ENCODE measurements at regions of chr12 and their contacts with region 1.

Region 1: DNA sequence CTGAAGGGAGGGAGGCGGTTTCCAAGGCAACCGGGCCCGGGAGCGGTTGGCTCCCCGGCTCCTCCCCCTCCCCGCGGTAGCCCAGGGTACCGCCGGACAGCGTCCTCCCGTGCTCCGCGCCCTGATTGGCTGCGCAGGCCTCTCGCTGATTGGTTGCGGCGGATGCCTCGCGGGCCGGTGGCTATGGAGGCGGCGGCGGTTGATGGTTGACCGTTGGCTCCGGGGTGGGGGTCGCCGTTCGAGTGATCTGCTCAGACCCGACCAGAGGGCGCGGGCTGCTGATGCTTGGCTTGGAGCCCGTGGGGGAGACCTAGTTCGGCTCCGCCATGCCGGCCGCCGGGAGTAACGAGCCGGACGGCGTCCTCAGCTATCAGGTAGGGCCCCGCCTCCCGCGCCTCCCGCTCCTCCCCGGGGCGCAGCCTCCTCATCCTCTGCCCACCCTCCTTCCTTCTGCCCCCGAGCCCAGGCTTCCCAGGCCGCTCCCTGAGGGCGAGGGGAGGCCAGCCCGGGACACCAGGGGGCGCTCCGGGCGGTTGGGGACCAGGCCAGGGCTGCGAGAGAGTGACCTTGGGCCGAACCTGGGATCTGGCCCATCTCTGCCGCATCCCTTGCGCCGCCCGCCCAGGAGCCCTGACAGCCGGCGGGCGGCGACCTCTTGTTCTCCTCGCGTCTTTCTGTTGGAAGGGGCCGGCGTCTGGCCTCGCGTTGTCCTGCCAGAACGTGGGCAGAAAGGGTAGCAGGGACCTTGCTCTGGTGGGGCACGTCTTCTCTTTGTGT is at the start of gene SLC4A8:
- ATAC-seq: peak; percentile 95 to 98 (median 96)
- H3K4me3 ChIP-seq: peak within 1 kb of the TSS; percentile 58 to 78 (median 66)
- H3K27ac ChIP-seq: peak within 1 kb of the TSS; percentile 88 to 91
- H3K4me1 ChIP-seq: peaks cover 12 to 15% of the 10 kb centered on the region in 2 donors
- total RNA-seq, gene SLC4A8: 5.8 to 26.3 (median 19.8) TPM

Region 2: GRCh38 chr12:51028811-51029484 is 395.9 kb before region 1 on chr12:
- in situ Hi-C with region 1: no loop called
- ATAC-seq: no peak
- H3K4me3 ChIP-seq: no peak overlapping the region
- H3K27ac ChIP-seq: no peak overlapping the region
- H3K4me1 ChIP-seq: peaks cover 7 to 11% of the 10 kb centered on the region in 2 donors

Region 3: DNA sequence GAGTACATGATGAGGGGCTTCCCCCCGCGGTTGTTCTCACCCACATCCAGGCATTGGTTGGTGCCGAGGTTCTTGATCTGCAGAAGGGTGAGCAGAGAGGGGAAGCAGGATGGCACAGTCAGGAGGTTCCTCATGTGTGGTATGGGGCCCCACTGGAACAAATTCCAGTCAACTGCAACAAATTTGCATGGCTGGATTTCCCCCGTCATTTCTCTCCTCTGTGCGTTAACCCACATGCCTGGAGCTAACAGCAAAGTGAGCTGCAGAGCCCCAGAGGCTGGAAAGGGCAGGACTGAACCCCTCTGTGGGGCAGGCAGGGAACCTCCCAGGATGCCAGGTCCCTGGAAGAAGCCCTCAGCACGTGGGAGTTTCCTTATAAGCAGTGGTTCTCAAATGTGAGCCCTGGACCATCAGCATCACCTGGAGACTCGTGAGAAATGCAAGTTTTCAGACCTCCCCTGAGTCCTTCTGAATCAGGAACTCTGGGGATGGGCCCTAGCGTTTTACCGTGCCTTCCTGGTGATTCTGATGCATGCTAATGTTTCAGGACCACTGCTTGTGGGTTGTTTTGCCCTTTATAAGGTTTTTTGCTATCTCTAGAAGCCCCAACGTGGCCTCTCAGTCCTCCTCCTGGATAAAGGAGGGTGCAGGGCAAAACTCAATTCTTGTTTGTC is 67.3 kb before region 1 on chr12:
- in situ Hi-C with region 1: no loop called
- ATAC-seq: no peak
- H3K4me3 ChIP-seq: no peak overlapping the region
- H3K27ac ChIP-seq: no peak overlapping the region
- H3K4me1 ChIP-seq: no peaks in the 10 kb centered on the region

Region 4: DNA sequence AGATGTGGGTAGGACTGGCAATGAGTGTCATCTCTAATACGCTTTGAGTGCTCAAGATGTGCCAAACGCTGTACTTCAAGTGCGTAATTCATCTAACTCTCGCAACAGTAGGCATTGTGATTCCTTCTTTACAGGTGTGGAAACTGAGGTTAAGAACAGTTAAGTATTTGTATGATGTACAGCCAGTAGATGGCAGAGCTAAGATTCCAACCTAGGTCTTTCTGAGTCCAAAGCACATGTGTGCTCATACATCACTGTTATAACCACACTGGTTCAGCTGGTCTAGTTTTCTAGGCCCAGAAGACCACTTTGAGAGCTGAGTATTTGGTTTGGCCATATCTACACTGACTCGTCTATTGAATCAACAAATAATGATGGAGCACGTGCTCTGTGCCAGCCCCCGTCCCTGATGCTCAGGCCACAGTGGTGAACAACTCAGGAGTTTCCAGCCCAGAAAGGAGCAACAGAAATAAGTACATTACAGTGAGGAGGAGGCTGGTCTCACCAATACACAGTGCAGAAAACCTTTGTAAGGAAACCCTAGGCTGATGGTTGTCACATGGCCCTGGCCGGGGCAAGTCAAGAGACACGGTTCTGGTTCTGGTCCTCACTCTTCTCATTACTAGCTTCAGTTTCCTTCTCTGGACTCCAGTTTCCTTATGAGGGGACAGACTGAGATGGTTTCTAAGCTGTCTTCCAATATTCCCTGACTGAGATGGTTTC is 96.9 kb after region 1 on chr12:
- in situ Hi-C with region 1: loop called in 2 of 9 experiments (anchors 10 to 25 kb)
- ATAC-seq: no peak
- H3K4me3 ChIP-seq: no peak overlapping the region
- H3K27ac ChIP-seq: no peak overlapping the region
- H3K4me1 ChIP-seq: no peaks in the 10 kb centered on the region

Region 5: GRCh38 chr12:51678086-51678724 is 253.4 kb after region 1 on chr12:
- in situ Hi-C with region 1: loop called in 1 of 9 experiments (anchors 25 kb)
- ATAC-seq: peak; percentile 44 to 86 (median 74)
- H3K4me3 ChIP-seq: no peak overlapping the region
- H3K27ac ChIP-seq: no peak overlapping the region
- H3K4me1 ChIP-seq: peaks cover 7 to 24% of the 10 kb centered on the region in 2 donors

Region 6: DNA sequence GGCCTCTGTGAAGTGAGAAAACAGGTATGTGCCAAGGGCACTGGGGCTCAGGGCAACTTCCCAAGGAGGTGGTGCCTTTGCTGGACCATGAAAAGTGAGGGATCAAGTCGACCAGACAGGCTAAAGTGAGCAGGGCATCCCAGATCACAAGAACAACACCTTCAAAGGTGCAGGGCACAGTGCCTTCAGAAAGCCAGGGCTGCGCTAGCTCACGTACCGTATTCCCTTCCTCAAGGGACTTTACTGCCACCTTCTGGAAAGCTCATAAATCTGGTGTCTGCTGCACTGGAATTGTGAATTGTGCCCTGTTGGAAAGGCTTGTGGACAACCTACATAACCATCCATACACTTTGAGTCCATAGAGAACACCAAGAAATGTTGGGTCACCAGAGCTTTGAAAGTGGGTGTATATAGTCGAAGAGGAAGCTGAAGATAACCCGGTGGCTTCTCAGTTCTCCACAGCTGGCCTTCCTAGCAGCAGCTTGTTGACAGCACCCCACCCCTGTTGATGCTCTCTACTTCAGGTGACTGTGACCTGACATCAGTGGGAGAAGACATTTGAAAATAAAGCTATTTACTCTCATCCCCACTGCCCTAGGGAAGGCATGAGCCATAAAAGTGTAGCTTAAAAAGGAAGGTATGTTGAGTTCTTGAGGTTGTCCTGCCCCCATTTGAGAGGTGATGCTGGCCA is 399.2 kb after region 1 on chr12:
- in situ Hi-C with region 1: loop called in 2 of 9 experiments (anchors 10 to 25 kb)
- ATAC-seq: peak; percentile 5 to 64 (median 40)
- H3K4me3 ChIP-seq: no peak overlapping the region
- H3K27ac ChIP-seq: no peak overlapping the region
- H3K4me1 ChIP-seq: peaks cover 19 to 21% of the 10 kb centered on the region in 2 donors

Region 7: DNA sequence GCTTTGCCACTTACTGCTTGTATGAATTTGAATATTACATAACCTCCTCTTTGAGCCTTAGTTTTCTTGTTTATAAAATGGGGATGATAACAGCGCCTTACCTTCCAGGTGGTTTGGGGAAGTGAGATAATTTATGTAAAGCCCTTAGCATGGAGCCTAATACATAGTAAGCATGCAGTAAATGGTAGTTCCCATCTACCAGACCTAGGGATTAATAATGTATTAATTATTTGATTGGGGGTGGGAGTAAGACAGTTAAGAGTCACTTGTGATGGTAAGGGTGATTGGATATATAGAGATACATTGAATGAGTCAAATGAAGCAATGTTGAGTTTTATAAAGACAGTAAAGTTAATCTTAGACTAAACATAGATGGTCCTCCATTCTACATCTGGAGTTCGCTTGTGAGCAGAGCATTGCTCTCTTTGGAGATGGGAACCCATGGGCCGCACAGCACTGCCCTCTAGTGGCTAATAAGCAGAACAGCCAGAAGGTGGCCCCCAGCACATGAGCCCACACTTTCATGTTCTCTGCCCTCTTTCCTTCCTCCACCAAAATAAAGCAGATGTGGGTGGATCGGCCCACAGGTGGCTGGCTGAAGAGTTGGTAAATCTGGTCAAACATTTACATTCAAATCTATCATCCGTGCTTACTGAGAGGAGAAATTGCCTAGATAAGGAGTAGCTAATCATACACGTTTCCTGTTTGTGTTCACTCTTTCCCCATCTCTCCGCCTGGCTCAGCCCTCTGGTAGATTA is 555.4 kb after region 1 on chr12:
- in situ Hi-C with region 1: loop called in 1 of 9 experiments (anchors 25 kb)
- ATAC-seq: peak; percentile 73 to 99 (median 86)
- H3K4me3 ChIP-seq: no peak overlapping the region
- H3K27ac ChIP-seq: peak overlapping the region in 1 of 2 donors; percentile 31
- H3K4me1 ChIP-seq: no peaks in the 10 kb centered on the region